ENCODE measurements at regions of chr3 and their contacts with region 1.

Region 1: GRCh38 chr3:195823998-195824397 is 12.3 kb upstream of the MUC4 start:
- DNase-seq: no peak
- CTCF ChIP-seq: no peak

Region 2: DNA sequence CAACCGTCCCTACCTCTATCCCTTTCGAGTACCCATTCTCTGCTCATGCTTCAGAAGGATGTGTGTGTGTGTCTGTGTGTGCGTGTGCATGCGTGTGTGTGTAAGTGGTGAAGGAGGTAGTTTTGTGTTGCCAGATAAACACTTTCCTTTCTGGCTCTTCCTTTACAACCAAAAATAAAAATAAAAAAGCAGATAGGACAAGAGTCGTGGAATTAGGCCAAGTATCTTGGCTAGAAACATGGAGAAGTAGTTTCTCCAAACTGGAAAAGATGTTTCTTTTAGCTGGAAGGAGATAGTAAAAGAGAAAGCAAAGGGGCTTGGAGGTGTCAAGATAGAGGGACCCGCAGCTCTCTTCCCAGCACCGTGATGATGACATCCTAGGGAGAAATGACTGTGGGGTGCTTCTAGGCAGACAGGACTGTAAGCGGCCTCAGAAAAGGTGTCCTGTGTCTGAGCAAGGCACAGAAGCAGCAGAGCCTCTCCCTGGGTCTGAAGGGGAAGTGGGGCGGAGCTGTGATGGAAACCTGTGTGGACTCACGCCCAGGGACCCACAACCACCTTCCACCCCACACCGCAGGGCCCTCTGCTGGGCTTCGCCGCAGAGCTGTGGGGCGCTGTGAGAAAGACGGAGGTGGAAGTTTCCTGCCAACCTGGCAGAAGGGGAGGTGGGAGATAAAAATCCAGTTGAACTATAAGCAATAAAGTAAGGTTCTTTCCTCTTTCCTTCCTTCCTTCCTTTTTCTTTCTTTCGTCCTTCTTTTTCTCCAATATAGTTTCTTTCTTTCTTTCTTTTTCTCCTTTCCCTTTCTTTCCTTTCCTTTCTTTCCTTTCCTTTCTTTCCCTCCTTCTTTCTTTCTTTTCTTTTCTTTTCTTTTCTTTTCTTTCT is 68.0 kb before region 1 on chr3:
- in situ Hi-C with region 1: loop called (anchors 10 kb)
- DNase-seq: no peak
- CTCF ChIP-seq: no peak

Measured in GM13977 (cell line).